H1 (cell line): ENCODE measurements at regions of chr5 and their contacts with region 1.

Region 1: DNA sequence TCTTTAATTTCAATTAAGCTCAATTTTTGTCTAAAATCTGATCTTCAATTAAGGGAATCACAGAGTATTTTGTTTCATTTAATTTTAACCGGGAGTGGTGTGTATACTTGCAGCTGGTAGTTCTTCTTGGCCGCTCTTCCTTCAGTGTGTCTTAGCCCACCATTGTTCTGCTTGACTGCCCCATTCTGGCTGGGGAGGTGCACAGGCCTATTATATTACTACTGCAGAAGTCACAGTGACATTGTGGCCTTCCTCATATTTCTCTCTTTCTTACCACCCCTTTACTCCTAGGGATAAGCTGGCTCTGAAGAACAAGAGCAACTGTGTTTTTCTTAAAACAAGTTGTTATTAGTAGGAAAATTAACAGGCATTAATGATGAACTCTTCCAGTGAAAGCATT is 123.7 kb downstream of the ATG10 start:
- DNase-seq: no peak
- H3K4me3 ChIP-seq: no peak overlapping the region
- H3K27ac ChIP-seq: no peak overlapping the region
- H3K4me1 ChIP-seq: no peaks in the 10 kb centered on the region
- H3K27me3 ChIP-seq: no peaks in the 10 kb centered on the region
- CTCF ChIP-seq: no peak
- EP300 ChIP-seq: no peak
- POLR2A ChIP-seq: no peak
- RAD21 ChIP-seq: no peak

Region 2: GRCh38 chr5:82107267-82107666 is 11.7 kb after region 1 on chr5:
- CTCF ChIA-PET with region 1: interaction called, 11 read pairs
- POLR2A ChIA-PET with region 1: no interaction called
- DNase-seq: no peak
- H3K4me3 ChIP-seq: no peak overlapping the region
- H3K27ac ChIP-seq: no peak overlapping the region
- H3K4me1 ChIP-seq: peaks cover 0 to 7% (median 1%) of the 10 kb centered on the region in 4 experiments; a peak in 3 of 7 replicates
- H3K27me3 ChIP-seq: no peaks in the 10 kb centered on the region
- CTCF ChIP-seq: peak in 1 of 3 experiments; percentile 35; a peak in 2 of 4 replicates
- EP300 ChIP-seq: no peak
- POLR2A ChIP-seq: no peak
- RAD21 ChIP-seq: peak; percentile 5 to 22; a peak in 1 of 4 replicates